ENCODE measurements at regions of chr3 and their contacts with region 1.

Region 1: GRCh38 chr3:45499529-45499928 is 95.0 kb upstream of the LIMD1 start:
- DNase-seq: no peak
- ATAC-seq: no peak
- H3K4me3 ChIP-seq: no peak overlapping the region
- H3K27ac ChIP-seq: no peak overlapping the region
- H3K4me1 ChIP-seq: peaks cover 2% of the 10 kb centered on the region
- H3K27me3 ChIP-seq: no peaks in the 10 kb centered on the region

Region 2: GRCh38 chr3:45043728-45044299 is 455.7 kb before region 1 on chr3:
- intact Hi-C with region 1: loop called in 2 of 4 experiments (anchors 10 kb)
- DNase-seq: no peak
- ATAC-seq: no peak
- H3K4me3 ChIP-seq: no peak overlapping the region
- H3K27ac ChIP-seq: peak overlapping the region; percentile 30
- H3K4me1 ChIP-seq: no peaks in the 10 kb centered on the region
- H3K27me3 ChIP-seq: no peaks in the 10 kb centered on the region

Region 3: GRCh38 chr3:45224824-45225464 is 274.6 kb before region 1 on chr3:
- intact Hi-C with region 1: loop called in 1 of 4 experiments (anchors 10 kb)
- DNase-seq: peak; percentile 72 to 89 (median 89)
- ATAC-seq: peak; percentile 79 to 82
- H3K4me3 ChIP-seq: peak overlapping the region; percentile 78
- H3K27ac ChIP-seq: no peak overlapping the region
- H3K4me1 ChIP-seq: no peaks in the 10 kb centered on the region
- H3K27me3 ChIP-seq: no peaks in the 10 kb centered on the region